IMR-90 (cell line): ENCODE measurements at regions of chr12 and their contacts with region 1.

Region 1: DNA sequence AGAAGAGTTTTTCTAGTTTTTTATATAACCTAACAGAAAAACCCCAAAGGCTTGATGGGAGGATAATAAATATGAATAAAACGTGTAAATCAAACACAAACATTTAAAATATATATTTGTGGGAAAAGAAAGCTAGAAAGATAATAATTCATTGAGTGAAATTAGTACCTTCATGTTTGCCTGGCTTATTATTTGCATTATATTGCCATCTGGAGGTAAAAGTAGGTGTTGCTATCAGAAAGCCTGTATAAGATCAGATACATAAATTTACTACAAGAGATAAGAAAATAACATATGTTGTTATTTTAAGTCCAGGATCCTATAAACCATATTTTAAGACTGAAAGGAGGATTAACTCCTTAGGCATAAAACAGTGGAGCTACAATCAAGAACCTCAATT is 77.7 kb downstream of the NTS start:
- DNase-seq: peak; percentile 5
- ATAC-seq: peak; percentile 46; the same call in 1 of the 2 replicates
- H3K4me3 ChIP-seq: no peak overlapping the region
- H3K27ac ChIP-seq: no peak overlapping the region
- H3K4me1 ChIP-seq: no peaks in the 10 kb centered on the region
- H3K27me3 ChIP-seq: no peaks in the 10 kb centered on the region
- CTCF ChIP-seq: peak; percentile 34; the same call in 1 of the 2 replicates
- POLR2A ChIP-seq: no peak
- RAD21 ChIP-seq: peak; percentile 16; the same call in 1 of the 2 replicates

Region 2: DNA sequence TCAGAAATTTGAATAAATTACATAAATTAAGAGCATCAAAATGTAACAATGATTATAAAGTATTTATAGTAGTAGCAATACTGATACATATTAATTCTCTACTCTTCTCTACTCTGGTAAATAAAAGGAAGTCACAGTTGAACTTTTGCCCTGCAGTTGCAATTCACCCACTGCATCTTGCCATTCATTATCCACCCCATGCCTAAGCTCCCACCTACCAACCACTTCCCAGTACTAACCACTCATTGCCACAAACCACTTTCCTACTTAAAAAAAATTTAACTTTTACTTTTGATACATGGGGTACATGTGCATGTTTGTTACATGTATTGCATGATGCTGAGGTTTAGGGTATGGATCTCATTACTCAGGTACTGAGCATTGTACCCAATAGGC is 289.6 kb before region 1 on chr12:
- CTCF ChIA-PET with region 1: no interaction called
- POLR2A ChIA-PET with region 1: no interaction called
- dilution Hi-C with region 1: no loop called
- in situ Hi-C with region 1: no loop called
- intact Hi-C with region 1: no loop called
- DNase-seq: no peak
- ATAC-seq: no peak
- H3K4me3 ChIP-seq: no peak overlapping the region
- H3K27ac ChIP-seq: no peak overlapping the region
- H3K4me1 ChIP-seq: no peaks in the 10 kb centered on the region
- H3K27me3 ChIP-seq: no peaks in the 10 kb centered on the region
- CTCF ChIP-seq: no peak
- POLR2A ChIP-seq: no peak
- RAD21 ChIP-seq: no peak

Region 3: DNA sequence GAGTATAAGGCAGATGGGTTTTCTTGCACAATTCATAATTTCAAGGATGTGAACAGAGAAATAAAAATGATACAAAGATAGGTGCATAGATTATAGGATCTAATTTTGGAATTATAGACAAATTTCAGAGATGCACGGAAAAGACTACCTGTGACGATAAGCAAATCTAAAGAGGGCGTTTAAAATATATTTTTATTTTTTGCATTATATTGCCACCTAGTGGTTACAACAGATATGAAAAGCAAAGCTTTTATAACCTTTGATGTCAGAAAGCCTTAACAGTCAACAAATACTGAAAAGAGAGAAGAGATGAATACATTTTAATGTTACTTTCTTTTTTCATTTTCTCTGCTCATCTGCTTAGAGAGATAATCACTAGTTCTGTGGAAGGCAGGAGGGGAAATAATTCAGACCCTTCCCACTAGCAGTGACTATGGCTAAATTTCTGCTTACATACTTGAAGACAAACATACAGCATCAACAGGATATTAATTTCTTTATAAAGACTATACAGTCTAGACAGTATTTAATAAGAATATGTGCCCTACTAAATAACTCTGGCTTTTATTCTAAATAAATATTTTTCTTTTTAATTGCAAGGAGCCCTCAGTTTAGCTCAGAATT is 31.4 kb before region 1 on chr12:
- CTCF ChIA-PET with region 1: interaction called, 5 read pairs
- POLR2A ChIA-PET with region 1: no interaction called
- dilution Hi-C with region 1: no loop called
- in situ Hi-C with region 1: no loop called
- intact Hi-C with region 1: loop called (anchors 1 kb)
- DNase-seq: peak; percentile 6
- ATAC-seq: no peak; the same call in 1 of the 2 replicates
- H3K4me3 ChIP-seq: no peak overlapping the region
- H3K27ac ChIP-seq: no peak overlapping the region
- H3K4me1 ChIP-seq: no peaks in the 10 kb centered on the region
- H3K27me3 ChIP-seq: no peaks in the 10 kb centered on the region
- CTCF ChIP-seq: peak; percentile 56
- POLR2A ChIP-seq: no peak
- RAD21 ChIP-seq: peak; percentile 32